CD4-positive, alpha-beta T cell (primary cell): ENCODE measurements at regions of chr17 and their contacts with region 1.

Region 1: GRCh38 chr17:58344047-58344790 is 7.8 kb downstream of the SUPT4H1 start:
- DNase-seq: peak in 13 of 14 experiments; percentile 56 to 97 (median 77)
- ATAC-seq: peak; percentile 71
- H3K4me3 ChIP-seq: peak overlapping the region; percentile 67
- H3K4me3 Mint-ChIP-seq: peak overlapping the region; percentile 84
- H3K27ac ChIP-seq: peak overlapping the region; percentile 97 to 98
- H3K27ac Mint-ChIP-seq: peak overlapping the region; percentile 84
- H3K4me1 ChIP-seq: peaks cover 86% of the 10 kb centered on the region
- H3K4me1 Mint-ChIP-seq: peaks cover 99% of the 10 kb centered on the region
- H3K27me3 ChIP-seq: no peaks in the 10 kb centered on the region
- H3K27me3 Mint-ChIP-seq: no peaks in the 10 kb centered on the region
- CTCF ChIP-seq: no peak

Region 2: DNA sequence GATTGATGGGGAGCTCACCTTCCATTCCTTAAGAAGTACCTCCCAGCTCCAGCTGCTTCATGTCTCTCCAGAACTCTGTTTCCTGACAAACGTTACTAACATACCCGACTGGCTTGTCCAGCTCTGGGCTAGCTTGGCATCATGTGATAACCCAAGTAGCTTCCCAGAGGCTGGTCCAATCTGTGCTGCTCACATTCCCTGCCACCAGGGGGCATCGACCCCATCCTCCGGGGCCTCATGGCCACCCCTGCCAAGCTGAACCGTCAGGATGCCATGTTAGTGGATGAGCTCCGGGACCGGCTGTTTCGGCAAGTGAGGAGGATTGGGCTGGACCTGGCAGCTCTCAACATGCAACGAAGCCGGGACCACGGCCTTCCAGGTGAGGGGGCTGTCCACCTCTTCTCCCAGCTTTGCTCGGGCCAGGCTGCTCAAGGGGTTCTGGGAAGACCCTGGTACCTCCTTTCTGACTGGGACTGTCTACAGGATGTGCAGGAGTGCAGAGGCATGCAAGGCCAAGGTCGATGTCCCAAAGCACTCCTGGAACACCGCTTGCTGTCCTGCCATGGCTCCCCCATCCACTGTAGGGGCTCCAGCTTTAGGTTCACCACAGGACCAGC is 144.1 kb before region 1 on chr17:
- CTCF ChIA-PET with region 1: no interaction called
- POLR2A ChIA-PET with region 1: no interaction called
- intact Hi-C with region 1: no loop called
- DNase-seq: peak; percentile 22 to 73 (median 42)
- ATAC-seq: peak; percentile 76
- H3K4me3 ChIP-seq: no peak overlapping the region
- H3K4me3 Mint-ChIP-seq: no peak overlapping the region
- H3K27ac ChIP-seq: no peak overlapping the region
- H3K27ac Mint-ChIP-seq: no peak overlapping the region
- H3K4me1 ChIP-seq: peaks cover 5% of the 10 kb centered on the region
- H3K4me1 Mint-ChIP-seq: peaks cover 4% of the 10 kb centered on the region
- H3K27me3 ChIP-seq: peaks cover 0 to 10% of the 10 kb centered on the region in 2 experiments
- H3K27me3 Mint-ChIP-seq: peaks cover 23% of the 10 kb centered on the region
- CTCF ChIP-seq: peak; percentile 67

Region 3: GRCh38 chr17:58232707-58233156 is 111.5 kb before region 1 on chr17:
- CTCF ChIA-PET with region 1: no interaction called
- POLR2A ChIA-PET with region 1: no interaction called
- intact Hi-C with region 1: no loop called
- DNase-seq: peak in 3 of 14 experiments; percentile 20 to 78 (median 68)
- ATAC-seq: no peak
- H3K4me3 ChIP-seq: no peak overlapping the region
- H3K4me3 Mint-ChIP-seq: no peak overlapping the region
- H3K27ac ChIP-seq: no peak overlapping the region
- H3K27ac Mint-ChIP-seq: no peak overlapping the region
- H3K4me1 ChIP-seq: no peaks in the 10 kb centered on the region
- H3K4me1 Mint-ChIP-seq: no peaks in the 10 kb centered on the region
- H3K27me3 ChIP-seq: peaks cover 10 to 22% of the 10 kb centered on the region in 2 experiments
- H3K27me3 Mint-ChIP-seq: peaks cover 39% of the 10 kb centered on the region
- CTCF ChIP-seq: no peak

Region 4: GRCh38 chr17:58329035-58329809 is 15.0 kb before region 1 on chr17:
- CTCF ChIA-PET with region 1: interaction called, 59 read pairs
- POLR2A ChIA-PET with region 1: interaction called, 1,359 read pairs
- intact Hi-C with region 1: loop called (anchors 1 kb)
- DNase-seq: peak; percentile 47 to 87 (median 72)
- ATAC-seq: peak; percentile 39
- H3K4me3 ChIP-seq: peak overlapping the region; percentile 84
- H3K4me3 Mint-ChIP-seq: peak overlapping the region; percentile 90
- H3K27ac ChIP-seq: peak overlapping the region; percentile 84 to 87
- H3K27ac Mint-ChIP-seq: peak overlapping the region; percentile 84
- H3K4me1 ChIP-seq: peaks cover 62% of the 10 kb centered on the region
- H3K4me1 Mint-ChIP-seq: peaks cover 53% of the 10 kb centered on the region
- H3K27me3 ChIP-seq: no peaks in the 10 kb centered on the region
- H3K27me3 Mint-ChIP-seq: no peaks in the 10 kb centered on the region
- CTCF ChIP-seq: peak; percentile 83

Region 5: DNA sequence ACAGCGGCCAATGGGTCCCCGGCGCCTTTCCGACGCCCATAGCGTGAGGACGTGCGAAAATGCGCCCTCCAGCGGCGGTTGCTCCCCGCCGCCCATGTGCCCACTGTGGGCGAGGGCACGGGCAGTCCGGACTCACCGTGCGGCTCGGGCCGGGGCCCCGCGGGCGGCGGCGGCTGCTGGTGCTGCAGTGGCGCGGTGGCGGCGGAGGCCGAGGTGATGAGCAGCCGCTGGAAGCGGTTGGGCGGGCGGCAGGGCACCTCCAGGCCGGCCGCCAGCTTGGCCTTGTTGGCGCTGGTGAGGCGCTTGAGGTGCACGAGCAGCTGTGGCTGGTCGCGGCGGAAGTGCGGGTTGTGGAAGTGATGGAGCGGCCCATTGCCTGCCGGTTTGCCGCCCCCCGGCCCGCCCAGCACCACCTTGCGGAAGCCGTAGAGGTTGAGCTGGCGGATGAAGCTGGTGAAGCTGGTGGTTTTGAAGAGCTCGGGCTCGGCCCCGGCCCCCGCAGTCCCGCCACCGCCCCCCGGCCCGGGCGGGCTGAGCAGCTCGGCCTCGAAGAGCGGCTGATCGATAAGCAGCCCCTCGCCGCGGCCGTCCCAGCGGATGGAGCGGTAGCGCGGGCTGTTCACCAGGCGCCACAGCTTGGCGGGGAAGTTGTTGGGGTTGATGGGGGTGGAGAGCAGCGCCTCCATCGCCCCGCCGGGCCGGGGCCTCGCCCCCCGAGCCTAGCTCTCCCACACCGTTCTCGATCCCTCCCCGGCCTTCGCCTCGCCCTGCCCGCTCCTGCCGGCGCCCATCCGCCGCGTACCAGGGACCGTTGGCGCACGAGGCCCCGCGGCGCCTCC is 143.6 kb after region 1 on chr17 and contains the start of gene HSF5:
- CTCF ChIA-PET with region 1: interaction called, 4 read pairs
- POLR2A ChIA-PET with region 1: interaction called, 10 read pairs
- intact Hi-C with region 1: no loop called
- DNase-seq: peak; percentile 52 to 88 (median 75)
- ATAC-seq: peak; percentile 93
- H3K4me3 ChIP-seq: peak within 1 kb of the TSS; percentile 52
- H3K4me3 Mint-ChIP-seq: peak within 1 kb of the TSS; percentile 62
- H3K27ac ChIP-seq: peak within 1 kb of the TSS in 1 of 2 donors; percentile 43
- H3K27ac Mint-ChIP-seq: peak within 1 kb of the TSS; percentile 39
- H3K4me1 ChIP-seq: peaks cover 13% of the 10 kb centered on the region
- H3K4me1 Mint-ChIP-seq: peaks cover 5% of the 10 kb centered on the region
- H3K27me3 ChIP-seq: no peaks in the 10 kb centered on the region
- H3K27me3 Mint-ChIP-seq: no peaks in the 10 kb centered on the region
- CTCF ChIP-seq: peak; percentile 68
- total RNA-seq, gene HSF5: 1.6 to 1.7 TPM

Region 6: DNA sequence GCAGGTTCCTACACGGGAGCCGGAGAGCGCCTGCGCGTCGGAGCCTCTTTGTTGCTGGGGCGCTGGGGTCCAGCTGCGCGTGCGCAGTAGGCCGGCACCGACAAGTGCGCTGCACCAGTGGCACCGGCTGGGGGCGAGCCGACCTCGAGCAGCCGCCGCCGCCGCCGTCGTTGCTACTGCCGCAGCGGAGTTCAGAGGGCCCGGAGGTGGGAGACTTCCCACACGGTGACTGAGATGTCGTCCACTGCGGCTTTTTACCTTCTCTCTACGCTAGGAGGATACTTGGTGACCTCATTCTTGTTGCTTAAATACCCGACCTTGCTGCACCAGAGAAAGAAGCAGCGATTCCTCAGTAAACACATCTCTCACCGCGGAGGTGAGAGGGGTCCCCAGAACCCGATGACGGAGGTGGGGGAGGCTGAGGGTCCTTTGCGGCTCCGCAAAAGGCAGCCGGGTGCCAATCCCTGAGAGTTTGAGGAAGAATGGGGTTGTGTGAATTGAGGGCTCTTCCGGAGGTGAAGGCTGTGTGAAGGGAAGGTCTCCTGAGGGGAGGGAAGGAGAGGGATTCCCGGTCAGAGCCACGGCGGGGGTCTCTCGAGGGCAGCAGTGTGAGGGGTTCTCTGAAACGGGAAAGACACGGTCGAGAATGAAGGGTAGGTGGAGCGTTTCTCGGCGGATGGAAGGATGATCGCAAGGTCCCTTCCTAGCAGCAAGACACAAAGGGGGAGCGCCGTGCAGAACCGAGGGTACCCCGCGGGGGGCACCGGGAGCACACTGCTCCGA is 876.3 kb after region 1 on chr17 and contains the start of gene GDPD1:
- CTCF ChIA-PET with region 1: no interaction called
- POLR2A ChIA-PET with region 1: no interaction called
- intact Hi-C with region 1: loop called in 1 of 2 experiments (anchors 10 kb)
- DNase-seq: peak; percentile 94 to 99 (median 97)
- ATAC-seq: peak; percentile 97
- H3K4me3 ChIP-seq: peak within 1 kb of the TSS; percentile 67
- H3K4me3 Mint-ChIP-seq: peak within 1 kb of the TSS; percentile 96
- H3K27ac ChIP-seq: peak within 1 kb of the TSS; percentile 66 to 87
- H3K27ac Mint-ChIP-seq: peak within 1 kb of the TSS; percentile 99
- H3K4me1 ChIP-seq: peaks cover 10% of the 10 kb centered on the region
- H3K4me1 Mint-ChIP-seq: peaks cover 16% of the 10 kb centered on the region
- H3K27me3 ChIP-seq: no peaks in the 10 kb centered on the region
- H3K27me3 Mint-ChIP-seq: no peaks in the 10 kb centered on the region
- CTCF ChIP-seq: peak; percentile 79
- total RNA-seq, gene GDPD1: 2.0 to 2.3 TPM